Adrenal gland (tissue), 19 donors: ENCODE measurements at regions of chr13 and their contacts with region 1.

Region 1: GRCh38 chr13:110225609-110226562 is 81.1 kb downstream of the COL4A1 start:
- DNase-seq: peak in 1 of 7 donors; percentile 43
- H3K4me3 ChIP-seq: no peak overlapping the region
- H3K27ac ChIP-seq: peak overlapping the region in 2 of 5 donors; percentile 31 to 77
- H3K4me1 ChIP-seq: peaks cover 8 to 12% of the 10 kb centered on the region in 2 donors
- H3K27me3 ChIP-seq: no peaks in the 10 kb centered on the region
- CTCF ChIP-seq: no peak
- POLR2A ChIP-seq: no peak

Region 2: GRCh38 chr13:110187641-110188161 is 38.2 kb before region 1 on chr13:
- intact Hi-C with region 1: no loop called
- DNase-seq: peak; percentile 51 to 88 (median 78)
- H3K4me3 ChIP-seq: no peak overlapping the region
- H3K27ac ChIP-seq: peak overlapping the region in 1 of 5 donors; percentile 20
- H3K4me1 ChIP-seq: no peaks in the 10 kb centered on the region
- H3K27me3 ChIP-seq: no peaks in the 10 kb centered on the region
- CTCF ChIP-seq: no peak
- POLR2A ChIP-seq: no peak

Region 3: DNA sequence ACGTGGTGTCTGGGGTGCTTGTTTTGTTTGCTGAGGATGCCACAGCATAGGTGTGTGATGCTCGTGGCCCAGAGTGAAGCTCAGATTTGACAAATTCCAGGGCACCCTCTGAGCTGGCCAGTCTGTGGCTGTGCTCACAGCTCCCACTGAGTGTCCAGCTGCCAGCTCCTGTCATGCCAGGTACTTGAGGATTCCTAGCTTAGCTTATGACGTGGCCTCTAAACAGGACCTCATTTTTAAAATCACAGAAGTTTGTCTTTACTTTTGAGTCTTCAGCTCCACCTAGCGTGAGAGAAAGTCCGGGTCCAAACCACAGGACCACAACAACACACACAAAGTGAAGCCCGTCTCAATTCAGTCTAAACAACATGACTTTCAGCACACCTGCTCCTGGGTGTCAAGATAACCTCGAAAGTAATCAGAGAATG is 218.4 kb after region 1 on chr13:
- intact Hi-C with region 1: loop called (anchors 10 kb)
- DNase-seq: peak in 5 of 7 donors; percentile 36 to 65 (median 55)
- H3K4me3 ChIP-seq: no peak overlapping the region
- H3K27ac ChIP-seq: peak overlapping the region in 3 of 5 donors; percentile 15 to 68 (median 50)
- H3K4me1 ChIP-seq: peaks cover 5 to 13% of the 10 kb centered on the region in 2 donors
- H3K27me3 ChIP-seq: no peaks in the 10 kb centered on the region
- CTCF ChIP-seq: peak in 5 of 6 experiments; percentile 38 to 55 (median 44)
- POLR2A ChIP-seq: no peak